Activated CD4-positive, alpha-beta memory T cell treated with anti-CD3 and anti-CD28 coated beads, Interleukin-2, amount 10 ng/mL, durations not matched to agents 7 days and 5 days (primary cell): ENCODE measurements at regions of chr17 and their contacts with region 1.

Region 1: GRCh38 chr17:17681187-17681848 is at the start of gene RAI1:
- DNase-seq: peak; percentile 72
- H3K4me3 Mint-ChIP-seq: peak within 1 kb of the TSS; percentile 71
- H3K27ac Mint-ChIP-seq: peak within 1 kb of the TSS; percentile 75
- H3K4me1 Mint-ChIP-seq: peaks cover 36% of the 10 kb centered on the region
- H3K27me3 Mint-ChIP-seq: peaks cover 7% of the 10 kb centered on the region
- total RNA-seq, gene RAI1: 16.7 TPM

Region 2: GRCh38 chr17:17694169-17695081 is 13.1 kb after region 1 on chr17:
- CTCF ChIA-PET with region 1: interaction called, 7 read pairs
- POLR2A ChIA-PET with region 1: interaction called, 47 read pairs
- DNase-seq: peak; percentile 76
- H3K4me3 Mint-ChIP-seq: peak overlapping the region; percentile 83
- H3K27ac Mint-ChIP-seq: peak overlapping the region; percentile 93
- H3K4me1 Mint-ChIP-seq: peaks cover 53% of the 10 kb centered on the region
- H3K27me3 Mint-ChIP-seq: no peaks in the 10 kb centered on the region

Region 3: GRCh38 chr17:17706140-17707060 is 25.1 kb after region 1 on chr17:
- CTCF ChIA-PET with region 1: no interaction called
- POLR2A ChIA-PET with region 1: no interaction called
- DNase-seq: no peak
- H3K4me3 Mint-ChIP-seq: no peak overlapping the region
- H3K27ac Mint-ChIP-seq: no peak overlapping the region
- H3K4me1 Mint-ChIP-seq: no peaks in the 10 kb centered on the region
- H3K27me3 Mint-ChIP-seq: no peaks in the 10 kb centered on the region

Region 4: DNA sequence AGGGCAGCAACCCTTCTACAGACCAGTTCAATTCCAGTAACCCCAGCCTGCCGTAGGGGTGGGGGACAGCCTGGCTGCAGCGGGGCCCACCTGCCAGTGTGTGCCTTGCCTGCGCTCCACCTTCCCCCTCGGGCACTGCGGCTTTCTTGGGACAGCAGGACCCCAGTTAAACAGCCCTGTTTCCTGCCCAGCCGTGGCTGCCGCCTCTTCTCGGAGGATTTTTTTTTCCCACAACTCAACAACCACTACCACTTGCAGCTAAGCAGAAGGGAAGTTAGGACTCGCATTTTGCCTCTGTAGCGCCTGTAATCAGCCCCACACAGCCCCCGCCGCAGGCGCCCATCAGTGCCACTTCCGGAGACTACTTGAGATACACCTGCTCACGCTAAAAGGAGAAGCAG is 76.1 kb after region 1 on chr17:
- CTCF ChIA-PET with region 1: no interaction called
- POLR2A ChIA-PET with region 1: no interaction called
- DNase-seq: peak; percentile 28
- H3K4me3 Mint-ChIP-seq: no peak overlapping the region
- H3K27ac Mint-ChIP-seq: no peak overlapping the region
- H3K4me1 Mint-ChIP-seq: peaks cover 28% of the 10 kb centered on the region
- H3K27me3 Mint-ChIP-seq: no peaks in the 10 kb centered on the region

Region 5: DNA sequence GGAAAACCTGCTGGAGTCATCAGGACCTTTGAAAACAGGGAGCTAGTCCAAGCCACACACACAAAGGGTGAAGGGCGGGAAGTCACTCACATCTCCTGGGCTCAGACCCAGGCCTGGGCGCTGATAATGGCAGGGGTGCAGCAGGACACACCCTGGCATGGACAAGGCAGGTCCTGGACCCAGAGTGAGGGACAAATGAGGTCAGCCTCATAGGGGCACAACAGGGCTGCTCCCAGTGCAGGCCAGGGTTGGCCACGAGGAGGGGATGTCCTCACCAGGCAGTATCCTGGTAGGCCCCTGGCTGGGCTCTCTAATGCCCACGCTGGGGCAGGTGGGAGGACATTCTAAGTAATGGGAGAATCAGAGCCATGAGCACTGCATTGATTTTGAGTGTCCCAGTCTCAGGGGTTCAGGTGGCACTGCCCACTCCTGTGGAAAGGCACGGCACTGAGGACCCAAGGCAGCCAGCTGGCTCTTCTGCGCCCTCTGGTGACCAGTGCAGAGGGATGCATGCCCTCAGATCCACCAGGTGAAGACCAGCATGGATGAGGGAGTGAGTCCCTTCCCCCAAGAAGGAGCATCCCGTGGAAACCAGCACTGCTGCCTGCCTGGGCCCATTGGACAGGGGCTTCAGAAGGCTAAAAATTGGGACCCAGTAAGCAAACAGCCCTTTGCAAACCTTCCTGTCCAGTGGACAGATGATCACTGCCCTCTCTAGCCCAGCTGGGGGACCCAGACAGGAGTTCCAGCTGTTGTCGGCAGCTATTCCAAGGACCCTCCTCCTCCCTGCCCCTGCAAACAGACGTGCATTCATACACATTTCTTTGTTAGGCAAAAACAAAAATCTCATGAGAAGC is 178.8 kb after region 1 on chr17:
- CTCF ChIA-PET with region 1: interaction called, 13 read pairs
- POLR2A ChIA-PET with region 1: interaction called, 6 read pairs
- DNase-seq: peak; percentile 76
- H3K4me3 Mint-ChIP-seq: no peak overlapping the region
- H3K27ac Mint-ChIP-seq: no peak overlapping the region
- H3K4me1 Mint-ChIP-seq: peaks cover 34% of the 10 kb centered on the region
- H3K27me3 Mint-ChIP-seq: no peaks in the 10 kb centered on the region